Lower leg skin (tissue), 4 donors: ENCODE measurements at regions of chr1 and their contacts with region 1.

Region 1: DNA sequence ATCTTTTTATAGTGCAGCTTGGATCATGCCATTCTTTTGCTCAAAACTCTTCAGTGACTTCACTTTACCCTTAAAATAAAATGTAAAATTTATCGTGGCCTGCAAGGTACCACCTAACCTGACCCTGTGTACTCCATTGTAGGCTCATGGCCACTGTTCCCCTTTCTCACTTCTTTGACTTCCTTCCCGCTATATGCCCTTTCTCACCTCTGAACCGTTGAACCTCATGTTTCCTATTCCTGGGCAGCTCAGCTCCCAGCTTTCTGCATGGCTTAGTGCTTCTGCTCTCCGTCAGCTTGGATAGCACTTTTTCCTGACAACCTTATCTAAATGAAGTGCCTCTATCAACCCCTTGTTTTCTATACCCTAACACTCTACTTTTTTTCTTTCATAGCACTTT is 61.1 kb upstream of the GPR25 start:
- DNase-seq: no peak
- H3K4me3 ChIP-seq: no peak overlapping the region
- CTCF ChIP-seq: no peak
- POLR2A ChIP-seq: no peak

Region 2: DNA sequence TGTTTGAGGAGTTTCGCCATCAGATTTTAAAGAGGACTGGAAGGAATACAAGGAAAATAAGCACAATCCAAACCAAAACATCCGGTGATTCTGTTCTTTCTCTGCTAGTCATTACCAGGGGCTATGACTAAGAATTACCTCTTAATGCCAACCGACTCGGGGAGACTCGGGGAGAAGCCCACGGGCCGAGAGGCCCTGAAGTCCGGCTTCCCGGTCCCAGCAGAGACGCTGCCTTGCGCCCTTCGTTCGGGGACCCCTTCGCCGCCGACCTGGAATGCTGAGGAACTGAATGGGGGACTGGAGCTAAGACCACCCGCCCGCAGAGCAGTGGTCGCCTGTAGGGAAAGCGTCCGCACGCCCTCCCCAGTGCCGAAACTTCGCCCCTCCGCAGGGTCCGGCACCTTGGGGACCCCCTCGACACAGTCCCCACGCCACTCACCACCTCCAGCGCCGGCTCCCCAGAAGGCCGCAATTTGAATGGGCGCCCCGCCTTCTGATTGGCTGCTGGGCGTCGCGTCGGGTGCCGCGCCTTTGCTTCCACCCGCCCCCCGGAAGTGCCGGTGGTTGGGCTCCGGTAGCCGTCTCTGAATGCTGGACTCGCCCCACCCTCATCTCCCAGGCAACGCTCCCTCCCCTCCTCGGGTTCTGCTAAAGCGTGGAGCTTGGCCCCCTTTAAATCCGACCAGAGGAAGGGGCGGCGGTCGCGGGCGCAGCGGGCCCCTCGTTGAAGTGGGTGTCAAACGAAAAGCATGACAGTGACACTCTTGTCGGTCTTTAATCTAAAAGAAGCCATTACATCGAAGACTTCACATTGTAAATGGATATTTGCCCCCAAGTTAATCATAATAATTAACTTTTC is 191.2 kb before region 1 on chr1 and contains the start of gene KIF14:
- intact Hi-C with region 1: loop called (anchors 5 kb)
- DNase-seq: peak; percentile 92 to 98
- H3K4me3 ChIP-seq: peak within 1 kb of the TSS; percentile 41
- CTCF ChIP-seq: no peak
- POLR2A ChIP-seq: no peak
- total RNA-seq, gene KIF14: 0.37 to 1.1 (median 0.61) TPM

Region 3: GRCh38 chr1:200945111-200945510 is 133.4 kb after region 1 on chr1:
- intact Hi-C with region 1: no loop called
- DNase-seq: no peak
- H3K4me3 ChIP-seq: no peak overlapping the region
- CTCF ChIP-seq: no peak
- POLR2A ChIP-seq: no peak